Dorsolateral prefrontal cortex (tissue), 120 donors: ENCODE measurements at regions of chr5 and their contacts with region 1.

Region 1: GRCh38 chr5:140042643-140043500 is at the start of gene NRG2:
- DNase-seq: peak; percentile 62 to 89 (median 75)
- H3K4me3 ChIP-seq: peak within 1 kb of the TSS; percentile 52 to 88 (median 80)
- H3K27ac ChIP-seq: peak within 1 kb of the TSS; percentile 41 to 94 (median 85)
- H3K27me3 ChIP-seq: no peaks in the 10 kb centered on the region
- CTCF ChIP-seq: peak in 52 of 56 donors; percentile 27 to 77 (median 59)
- total RNA-seq, gene NRG2: 5.8 to 21.5 (median 11.8) TPM

Region 2: DNA sequence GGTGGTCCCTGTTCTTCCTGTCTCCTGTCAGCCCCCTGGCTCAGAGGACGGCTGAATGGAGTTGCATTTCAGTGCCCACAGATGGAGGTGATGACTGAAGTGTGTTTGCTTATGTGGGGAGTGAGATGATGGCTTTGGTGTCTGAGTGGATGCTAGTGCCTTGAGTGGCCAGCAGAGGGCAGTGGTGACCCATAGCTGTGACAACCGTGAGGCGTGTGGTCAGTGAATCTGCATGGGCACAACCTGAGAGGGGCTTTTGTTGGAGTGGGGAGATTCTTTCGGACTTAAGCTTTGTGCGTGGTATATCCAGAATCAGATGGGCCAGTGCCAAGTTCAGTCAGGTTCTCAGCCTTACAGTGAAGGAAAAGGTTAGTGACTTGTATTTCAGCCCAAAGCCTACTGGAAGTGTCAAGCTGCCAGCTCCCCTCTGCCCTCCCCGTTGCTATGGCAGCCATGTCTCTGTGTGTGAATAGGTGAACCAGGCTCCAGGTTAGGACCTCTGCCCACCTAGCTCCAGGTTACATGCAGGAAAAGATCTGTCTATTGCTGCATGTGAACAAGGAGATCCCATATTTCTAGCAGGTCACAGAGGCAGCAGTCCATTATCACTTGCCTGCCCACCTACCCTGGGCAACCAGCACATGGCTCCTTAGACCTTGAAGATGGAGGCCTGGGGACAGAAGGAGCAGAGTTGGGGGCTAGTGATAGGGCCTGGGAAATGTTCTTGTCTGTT is 409.4 kb before region 1 on chr5:
- intact Hi-C with region 1: no loop called
- DNase-seq: peak in 9 of 10 donors; percentile 69 to 86 (median 77)
- H3K4me3 ChIP-seq: peak overlapping the region in 1 of 59 donors; percentile 3
- H3K27ac ChIP-seq: peak overlapping the region in 25 of 59 donors; percentile 0 to 95 (median 31)
- H3K27me3 ChIP-seq: no peaks in the 10 kb centered on the region
- CTCF ChIP-seq: peak; percentile 76 to 100 (median 98)

Region 3: DNA sequence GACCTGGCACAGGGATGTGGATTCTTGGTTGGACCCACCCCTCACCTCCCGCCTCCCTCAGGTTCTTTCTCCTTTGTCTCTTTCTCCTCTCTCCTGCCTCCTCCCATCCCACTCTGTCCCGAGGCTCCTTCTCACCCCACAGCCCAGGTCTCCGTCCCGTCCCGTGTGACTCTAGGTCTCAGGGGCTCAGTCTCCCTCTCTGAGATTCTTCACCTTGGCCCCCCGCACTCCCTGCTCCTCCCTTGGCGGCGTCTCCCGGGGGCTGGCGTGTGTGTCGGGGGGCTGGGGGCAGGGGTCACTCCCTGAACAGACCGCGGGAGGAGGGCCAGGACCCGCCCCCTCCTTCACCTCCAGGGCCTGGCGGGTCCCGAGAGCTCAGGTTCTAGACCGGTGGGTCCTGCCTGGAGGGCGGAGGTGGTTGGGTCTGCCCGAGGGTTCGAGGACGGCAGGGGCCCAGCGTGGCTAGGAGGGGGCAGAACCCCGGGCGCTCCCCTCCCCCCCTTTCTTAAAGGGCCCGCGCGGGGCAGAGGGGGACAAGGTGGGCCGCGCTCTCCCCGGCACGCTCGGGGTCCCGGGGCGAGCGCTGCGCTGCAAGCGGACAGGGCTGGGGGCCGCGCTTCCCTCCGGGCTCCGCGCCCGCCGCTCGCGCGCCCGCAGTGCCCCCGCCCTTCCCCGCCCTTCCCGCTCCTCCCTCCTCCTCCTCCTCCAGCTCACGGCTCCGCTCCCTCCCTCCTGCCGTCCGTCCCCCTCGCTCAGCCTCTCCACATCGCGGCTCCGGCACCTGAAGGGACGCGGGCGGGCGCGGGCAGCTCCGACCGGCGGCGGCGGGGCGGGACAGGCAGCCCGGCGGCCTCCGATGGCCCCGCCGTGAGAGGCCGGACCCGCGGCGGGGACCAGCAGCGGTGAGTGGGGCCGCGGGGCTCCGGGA is 247.5 kb before region 1 on chr5 and contains the start of gene PSD2:
- intact Hi-C with region 1: loop called in 1 of 2 experiments (anchors 10 kb)
- DNase-seq: peak in 6 of 10 donors; percentile 48 to 76 (median 62)
- H3K4me3 ChIP-seq: peak within 1 kb of the TSS; percentile 30 to 77 (median 65)
- H3K27ac ChIP-seq: peak within 1 kb of the TSS in 41 of 59 donors; percentile 11 to 82 (median 52)
- H3K27me3 ChIP-seq: peaks cover 0 to 4% (median 0%) of the 10 kb centered on the region in 45 donors
- CTCF ChIP-seq: no peak
- total RNA-seq, gene PSD2: 37.2 to 251 (median 77.9) TPM

Region 4: GRCh38 chr5:140107312-140108083 is 64.6 kb after region 1 on chr5:
- intact Hi-C with region 1: loop called (anchors 2 to 5 kb)
- DNase-seq: peak; percentile 79 to 95 (median 92)
- H3K4me3 ChIP-seq: peak overlapping the region; percentile 45 to 90 (median 78)
- H3K27ac ChIP-seq: peak overlapping the region; percentile 85 to 100 (median 98)
- H3K27me3 ChIP-seq: no peaks in the 10 kb centered on the region
- CTCF ChIP-seq: peak in 54 of 56 donors; percentile 11 to 64 (median 42)